ENCODE measurements at regions of chr4 and their contacts with region 1.

Region 1: DNA sequence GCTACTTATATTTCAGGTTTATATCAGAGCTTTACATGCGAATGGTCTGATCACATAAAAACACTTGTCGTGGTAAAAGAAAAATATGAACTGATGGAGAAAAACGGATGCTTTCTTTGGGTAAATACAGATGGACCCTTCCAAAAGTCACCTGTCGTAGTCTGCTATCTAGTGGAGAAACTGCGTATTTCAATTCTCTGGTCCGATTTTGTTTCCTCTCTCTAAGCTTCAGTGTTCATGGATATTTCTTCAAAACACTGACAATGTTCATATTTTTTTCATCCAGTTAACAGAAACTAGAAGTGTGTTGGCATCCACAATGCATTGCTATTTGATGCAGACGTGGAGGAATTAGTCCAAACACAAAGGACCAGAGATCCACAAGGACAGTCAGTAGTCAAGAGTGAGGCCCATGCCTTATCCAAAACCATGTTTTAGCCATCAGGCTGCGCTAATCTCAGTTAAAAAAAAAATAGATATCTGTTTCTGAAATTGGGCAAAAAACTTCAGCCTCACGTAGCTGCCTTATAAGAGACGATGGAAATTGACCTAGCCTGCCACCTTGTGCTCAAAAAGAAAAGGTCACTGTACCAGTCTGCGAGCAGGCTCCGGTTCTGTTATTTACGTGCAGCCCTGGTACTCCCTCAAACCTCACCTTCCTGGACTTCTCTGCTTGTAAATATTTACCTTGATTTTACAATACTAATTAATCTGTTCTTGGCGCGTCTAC is 16.0 kb downstream of the MEPE start:
- H3K4me3 ChIP-seq: no peak overlapping the region; the same call in 1 of the 2 replicates
- H3K27ac ChIP-seq: no peak overlapping the region
- H3K4me1 ChIP-seq: no peaks in the 10 kb centered on the region
- CTCF ChIP-seq: no peak

Region 2: DNA sequence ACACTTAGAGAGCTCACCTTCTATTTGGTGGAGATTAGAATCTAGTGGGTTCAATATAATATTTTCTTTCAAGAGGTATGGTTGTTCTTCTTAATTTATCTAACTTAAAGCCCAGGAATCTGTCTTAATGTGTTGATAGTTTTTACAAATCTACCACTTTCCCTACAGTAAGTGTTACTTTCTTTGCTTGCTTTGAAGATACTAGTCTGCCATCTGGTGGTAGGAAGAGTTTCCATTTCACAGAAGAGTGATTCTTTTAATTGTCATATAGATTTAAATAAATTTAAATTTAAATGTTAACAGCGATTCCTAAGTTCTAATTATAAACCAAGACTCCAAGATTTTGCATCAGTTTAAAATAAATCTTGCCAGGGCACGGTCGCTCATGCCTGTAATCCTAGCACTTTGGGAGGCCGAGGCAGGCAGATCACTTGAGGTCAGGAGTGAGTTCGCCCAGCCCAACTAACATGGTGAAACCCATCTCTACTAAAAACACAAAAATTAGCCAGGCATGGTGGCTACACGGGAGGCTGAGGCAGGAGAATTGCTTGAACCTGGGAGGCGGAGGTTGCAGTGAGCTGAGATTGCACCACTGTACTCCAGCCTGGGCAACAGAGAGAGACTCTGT is 382.9 kb before region 1 on chr4:
- CTCF ChIA-PET with region 1: interaction called, 13 read pairs
- POLR2A ChIA-PET with region 1: no interaction called
- H3K4me3 ChIP-seq: no peak overlapping the region
- H3K27ac ChIP-seq: no peak overlapping the region
- H3K4me1 ChIP-seq: 0 out of 2 replicates have a peak, but pooled peaks cover 2% of the 10 kb centered on the region
- CTCF ChIP-seq: 0 out of 2 replicates have a peak, but pooled peaks have one; percentile 10

Region 3: GRCh38 chr4:87679449-87680169 is 169.2 kb before region 1 on chr4:
- CTCF ChIA-PET with region 1: interaction called, 39 read pairs
- POLR2A ChIA-PET with region 1: no interaction called
- H3K4me3 ChIP-seq: no peak overlapping the region
- H3K27ac ChIP-seq: no peak overlapping the region
- H3K4me1 ChIP-seq: no peaks in the 10 kb centered on the region
- CTCF ChIP-seq: peak; percentile 20; the same call in 1 of the 2 replicates

Region 4: GRCh38 chr4:87973283-87974169 is 124.7 kb after region 1 on chr4:
- CTCF ChIA-PET with region 1: interaction called, 32 read pairs
- POLR2A ChIA-PET with region 1: no interaction called
- H3K4me3 ChIP-seq: no peak overlapping the region
- H3K27ac ChIP-seq: no peak overlapping the region
- H3K4me1 ChIP-seq: no peaks in the 10 kb centered on the region; the same call in 1 of the 2 replicates
- CTCF ChIP-seq: peak; percentile 26; the same call in 1 of the 2 replicates

Region 5: GRCh38 chr4:88211473-88212252 is 362.9 kb after region 1 on chr4:
- CTCF ChIA-PET with region 1: interaction called, 17 read pairs
- POLR2A ChIA-PET with region 1: no interaction called
- H3K4me3 ChIP-seq: no peak overlapping the region
- H3K27ac ChIP-seq: no peak overlapping the region
- H3K4me1 ChIP-seq: no peaks in the 10 kb centered on the region
- CTCF ChIP-seq: no peak

Measured in HEK293 (cell line).